ENCODE measurements at regions of chr13 and their contacts with region 1.

Region 1: GRCh38 chr13:28423010-28423409 is 71.9 kb downstream of the FLT1 start:
- DNase-seq: no peak
- ATAC-seq: no peak
- H3K4me3 ChIP-seq: no peak overlapping the region
- H3K27ac ChIP-seq: no peak overlapping the region
- H3K4me1 ChIP-seq: no peaks in the 10 kb centered on the region; the same call in 1 of the 2 replicates
- H3K27me3 ChIP-seq: no peaks in the 10 kb centered on the region
- CTCF ChIP-seq: no peak
- POLR2A ChIP-seq: no peak
- RAD21 ChIP-seq: no peak

Region 2: GRCh38 chr13:28268800-28269223 is 154.2 kb before region 1 on chr13:
- CTCF ChIA-PET with region 1: no interaction called
- POLR2A ChIA-PET with region 1: no interaction called
- dilution Hi-C with region 1: no loop called
- in situ Hi-C with region 1: no loop called
- intact Hi-C with region 1: no loop called
- DNase-seq: no peak
- ATAC-seq: no peak
- H3K4me3 ChIP-seq: no peak overlapping the region
- H3K27ac ChIP-seq: no peak overlapping the region
- H3K4me1 ChIP-seq: no peaks in the 10 kb centered on the region
- H3K27me3 ChIP-seq: no peaks in the 10 kb centered on the region
- CTCF ChIP-seq: no peak
- POLR2A ChIP-seq: no peak
- RAD21 ChIP-seq: no peak

Region 3: DNA sequence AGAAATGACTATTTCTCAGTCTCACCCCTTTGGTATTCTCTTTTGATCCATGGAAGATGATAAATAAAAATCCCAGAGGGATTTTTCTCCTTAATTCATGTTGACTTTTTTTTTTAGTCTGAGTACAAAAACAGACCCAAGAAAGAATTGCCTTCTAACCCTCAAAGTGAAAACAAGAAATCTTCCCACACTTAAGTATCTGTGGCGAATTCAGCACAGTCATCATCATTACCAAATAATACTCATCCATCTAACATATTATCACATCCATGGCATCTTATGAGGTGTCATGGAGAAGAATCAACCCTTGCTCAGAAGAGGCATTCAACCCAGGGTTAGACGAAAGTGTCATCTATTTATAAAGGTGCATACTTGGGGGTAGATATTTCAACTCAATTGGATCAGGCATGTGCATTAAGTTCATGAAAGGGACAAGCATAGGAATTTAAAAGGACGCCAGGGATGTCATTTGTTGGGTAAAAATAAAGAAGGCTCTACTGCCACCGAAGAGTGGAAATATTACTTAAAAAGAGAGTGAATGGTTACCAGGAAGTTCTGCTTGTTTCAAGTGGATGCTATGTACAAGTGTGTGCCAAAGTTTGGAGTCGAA is 30.0 kb before region 1 on chr13:
- CTCF ChIA-PET with region 1: no interaction called
- POLR2A ChIA-PET with region 1: no interaction called
- dilution Hi-C with region 1: no loop called
- in situ Hi-C with region 1: no loop called
- intact Hi-C with region 1: loop called (anchors 1 kb)
- DNase-seq: no peak
- ATAC-seq: no peak
- H3K4me3 ChIP-seq: no peak overlapping the region
- H3K27ac ChIP-seq: no peak overlapping the region
- H3K4me1 ChIP-seq: peaks cover 8% of the 10 kb centered on the region; the same call in 1 of the 2 replicates
- H3K27me3 ChIP-seq: no peaks in the 10 kb centered on the region
- CTCF ChIP-seq: no peak
- POLR2A ChIP-seq: no peak
- RAD21 ChIP-seq: no peak

Measured in IMR-90 (cell line).